PC-9 (cell line): ENCODE measurements at regions of chr21 and their contacts with region 1.

Region 1: DNA sequence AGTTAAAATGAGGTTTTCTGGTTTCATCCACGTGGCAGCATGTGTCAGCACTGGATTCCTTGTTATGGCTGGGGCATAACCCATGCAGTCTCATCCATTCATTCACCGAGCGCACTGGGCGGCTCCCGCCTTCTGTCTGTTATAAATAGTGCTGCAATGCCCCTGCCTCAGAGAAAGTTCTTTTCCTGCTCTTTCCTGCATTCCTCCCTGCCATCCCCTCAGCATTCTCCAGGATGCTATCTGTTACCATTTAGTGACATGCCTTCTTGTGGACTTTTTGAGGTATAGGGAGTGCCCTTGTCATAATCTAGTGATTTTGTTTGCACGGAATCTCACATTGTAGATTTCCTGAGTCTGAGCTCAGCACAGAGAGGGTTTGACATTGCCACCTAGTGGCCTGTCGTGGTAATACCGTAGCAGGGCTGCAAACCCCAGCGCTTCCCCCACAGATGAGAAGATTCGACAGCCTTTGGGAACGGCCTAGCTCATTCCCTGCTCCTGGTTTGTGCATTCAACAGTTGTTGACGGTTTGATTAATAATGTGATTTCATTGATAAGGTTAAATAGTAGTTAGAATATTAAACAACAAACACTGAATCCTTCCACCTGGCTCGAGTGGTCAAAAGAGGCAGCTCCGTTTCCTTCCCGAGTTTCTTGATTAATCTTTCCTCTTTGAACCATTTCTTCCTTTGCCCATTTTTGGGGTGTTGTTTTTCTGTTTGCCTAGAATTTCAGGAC is 46.3 kb downstream of the UMODL1 start:
- DNase-seq: peak; percentile 47 to 69
- H3K4me3 ChIP-seq: no peak overlapping the region
- H3K27ac ChIP-seq: no peak overlapping the region
- H3K4me1 ChIP-seq: peaks cover 32% of the 10 kb centered on the region
- H3K27me3 ChIP-seq: no peaks in the 10 kb centered on the region
- CTCF ChIP-seq: peak; percentile 89

Region 2: GRCh38 chr21:41879190-41879998 is 238.0 kb before region 1 on chr21 and contains the start of gene PRDM15:
- CTCF ChIA-PET with region 1: no interaction called
- POLR2A ChIA-PET with region 1: no interaction called
- intact Hi-C with region 1: loop called (anchors 5 kb)
- DNase-seq: peak in 1 of 2 experiments; percentile 72
- H3K4me3 ChIP-seq: peak within 1 kb of the TSS; percentile 76
- H3K27ac ChIP-seq: peak within 1 kb of the TSS; percentile 77
- H3K4me1 ChIP-seq: peaks cover 15% of the 10 kb centered on the region
- H3K27me3 ChIP-seq: no peaks in the 10 kb centered on the region
- CTCF ChIP-seq: no peak
- total RNA-seq, gene PRDM15: 8.8 and 8.9 TPM in 2 replicates

Region 3: DNA sequence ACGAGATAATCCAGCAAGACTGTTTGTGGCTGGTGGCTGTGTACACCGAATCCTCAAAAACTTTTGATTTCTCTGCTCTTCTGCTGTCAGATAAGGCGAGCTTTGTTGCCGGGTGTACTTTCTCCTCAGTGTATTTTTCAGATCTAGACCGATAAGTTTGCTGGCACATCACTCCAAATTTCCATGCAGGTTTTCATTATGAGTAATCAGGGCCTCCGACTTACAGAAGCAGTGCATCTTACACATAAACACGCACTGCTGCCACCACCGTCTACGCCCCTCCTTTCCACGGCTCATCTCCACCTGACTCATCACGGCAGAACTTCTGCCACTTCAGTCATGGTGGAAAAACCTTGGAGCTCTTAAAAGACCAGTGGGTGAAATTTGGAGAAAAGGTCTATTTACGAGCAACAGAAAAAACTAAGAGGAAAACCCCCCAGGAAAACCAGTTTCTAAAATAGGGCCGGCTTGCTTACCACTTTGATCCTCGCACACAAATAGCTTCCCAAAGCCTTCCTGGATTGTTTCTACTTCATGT is 114.9 kb before region 1 on chr21:
- CTCF ChIA-PET with region 1: no interaction called
- POLR2A ChIA-PET with region 1: no interaction called
- intact Hi-C with region 1: no loop called
- DNase-seq: peak in 1 of 2 experiments; percentile 35
- H3K4me3 ChIP-seq: no peak overlapping the region
- H3K27ac ChIP-seq: no peak overlapping the region
- H3K4me1 ChIP-seq: no peaks in the 10 kb centered on the region
- H3K27me3 ChIP-seq: no peaks in the 10 kb centered on the region
- CTCF ChIP-seq: no peak

Region 4: GRCh38 chr21:42806509-42807140 is 689.2 kb after region 1 on chr21:
- CTCF ChIA-PET with region 1: no interaction called
- POLR2A ChIA-PET with region 1: no interaction called
- intact Hi-C with region 1: no loop called
- DNase-seq: no peak
- H3K4me3 ChIP-seq: no peak overlapping the region
- H3K27ac ChIP-seq: no peak overlapping the region
- H3K4me1 ChIP-seq: no peaks in the 10 kb centered on the region
- H3K27me3 ChIP-seq: no peaks in the 10 kb centered on the region
- CTCF ChIP-seq: no peak

Region 5: DNA sequence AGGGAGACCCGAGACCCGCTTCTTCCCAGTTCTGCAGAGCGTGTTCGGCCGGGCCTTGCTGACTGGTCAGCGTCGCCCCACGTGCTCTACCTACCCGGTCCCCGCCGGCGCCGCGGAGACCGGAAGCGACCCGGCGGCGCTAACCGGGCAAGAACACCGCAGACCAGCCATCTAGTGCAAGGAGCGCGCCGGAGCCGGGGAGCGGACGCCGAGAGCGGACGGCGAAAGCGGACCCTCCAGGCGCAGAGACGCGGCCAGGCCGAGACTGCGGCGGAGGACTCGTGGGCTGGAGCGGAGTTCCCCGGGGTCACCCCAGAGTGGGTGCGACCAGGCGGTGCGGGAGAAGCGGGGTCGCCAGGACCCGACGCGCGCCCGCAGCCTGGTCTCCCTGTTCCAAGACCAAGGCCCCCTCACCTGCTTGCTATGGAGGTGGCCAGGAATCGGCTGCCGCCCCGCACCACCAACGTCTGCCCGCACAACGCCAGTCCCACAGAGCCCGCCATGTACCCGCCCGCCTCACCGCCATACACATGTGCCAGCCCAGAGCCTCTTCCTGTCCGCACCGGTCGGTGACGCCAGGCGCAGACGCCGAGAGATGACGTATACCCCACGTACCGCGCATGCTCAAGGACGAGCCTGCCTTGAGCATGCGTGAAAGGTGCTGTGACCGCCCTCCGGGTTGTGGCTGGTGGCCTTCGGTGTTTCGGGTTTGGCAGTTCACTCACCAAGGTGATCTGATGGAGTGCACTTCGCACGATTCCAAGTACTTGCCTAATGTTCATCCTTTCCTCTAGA is 761.8 kb after region 1 on chr21 and contains the start of gene WDR4:
- CTCF ChIA-PET with region 1: no interaction called
- POLR2A ChIA-PET with region 1: no interaction called
- intact Hi-C with region 1: no loop called
- DNase-seq: peak; percentile 91 to 94
- H3K4me3 ChIP-seq: peak within 1 kb of the TSS; percentile 61
- H3K27ac ChIP-seq: peak within 1 kb of the TSS; percentile 75
- H3K4me1 ChIP-seq: peaks cover 6% of the 10 kb centered on the region; the same call in 1 of the 2 replicates
- H3K27me3 ChIP-seq: no peaks in the 10 kb centered on the region
- CTCF ChIP-seq: no peak
- total RNA-seq, gene WDR4: 17.6 and 18.7 TPM in 2 replicates